Dorsolateral prefrontal cortex (tissue), 120 donors: ENCODE measurements at regions of chr10 and their contacts with region 1.

Region 1: GRCh38 chr10:697097-697875 is 7.8 kb upstream of the DIP2C start:
- DNase-seq: no peak
- H3K4me3 ChIP-seq: no peak overlapping the region
- H3K27ac ChIP-seq: no peak overlapping the region
- H3K27me3 ChIP-seq: no peaks in the 10 kb centered on the region
- CTCF ChIP-seq: no peak

Region 2: DNA sequence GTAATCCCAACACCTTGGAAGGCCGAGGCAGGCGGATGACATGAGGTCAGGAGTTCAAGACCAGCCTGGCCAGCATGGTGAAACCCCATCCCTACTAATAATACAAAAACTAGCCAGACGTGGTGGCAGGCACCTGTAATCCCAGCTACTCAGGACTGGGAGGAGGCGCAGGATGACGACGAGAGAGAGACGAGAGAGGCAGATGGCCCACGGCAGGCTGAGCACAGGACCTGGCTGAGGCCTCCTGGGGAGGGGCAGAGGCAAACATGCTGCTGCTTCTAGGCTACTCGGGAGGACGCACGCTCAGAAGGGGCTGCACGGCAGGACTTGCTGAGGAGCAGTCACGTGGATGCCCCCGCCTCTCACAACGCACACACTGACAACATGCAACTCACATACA is 30.2 kb before region 1 on chr10:
- intact Hi-C with region 1: no loop called
- DNase-seq: peak in 1 of 10 donors; percentile 69
- H3K4me3 ChIP-seq: no peak overlapping the region
- H3K27ac ChIP-seq: peak overlapping the region in 44 of 59 donors; percentile 18 to 98 (median 92)
- H3K27me3 ChIP-seq: no peaks in the 10 kb centered on the region
- CTCF ChIP-seq: no peak

Region 3: GRCh38 chr10:773562-774161 is 76.4 kb after region 1 on chr10:
- intact Hi-C with region 1: loop called in 1 of 2 experiments (anchors 5 kb)
- DNase-seq: no peak
- H3K4me3 ChIP-seq: no peak overlapping the region
- H3K27ac ChIP-seq: no peak overlapping the region
- H3K27me3 ChIP-seq: no peaks in the 10 kb centered on the region
- CTCF ChIP-seq: no peak

Region 4: DNA sequence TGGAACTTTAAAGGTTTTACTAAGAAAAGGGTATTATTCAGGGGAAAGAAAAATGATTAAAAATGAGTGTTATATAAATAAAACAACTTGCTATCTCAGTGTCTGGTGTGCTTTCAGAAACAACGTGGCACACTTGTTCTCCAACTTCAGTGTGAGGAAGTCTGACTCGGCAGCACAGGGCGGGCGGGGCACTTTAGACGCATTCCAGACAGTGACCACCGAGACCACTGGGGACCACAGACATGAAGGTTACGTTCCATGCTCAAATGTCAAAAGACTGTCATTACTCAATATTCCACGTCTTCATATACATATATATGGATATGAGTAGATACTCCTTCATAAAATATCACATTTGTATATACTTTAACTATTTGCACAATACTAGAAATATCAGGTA is 147.3 kb after region 1 on chr10:
- intact Hi-C with region 1: no loop called
- DNase-seq: no peak
- H3K4me3 ChIP-seq: no peak overlapping the region
- H3K27ac ChIP-seq: no peak overlapping the region
- H3K27me3 ChIP-seq: no peaks in the 10 kb centered on the region
- CTCF ChIP-seq: no peak